HEK293T (cell line): ENCODE measurements at regions of chr11 and their contacts with region 1.

Region 1: GRCh38 chr11:30143098-30143705 is 87.6 kb upstream of the FSHB start:
- DNase-seq: peak; percentile 44

Region 2: DNA sequence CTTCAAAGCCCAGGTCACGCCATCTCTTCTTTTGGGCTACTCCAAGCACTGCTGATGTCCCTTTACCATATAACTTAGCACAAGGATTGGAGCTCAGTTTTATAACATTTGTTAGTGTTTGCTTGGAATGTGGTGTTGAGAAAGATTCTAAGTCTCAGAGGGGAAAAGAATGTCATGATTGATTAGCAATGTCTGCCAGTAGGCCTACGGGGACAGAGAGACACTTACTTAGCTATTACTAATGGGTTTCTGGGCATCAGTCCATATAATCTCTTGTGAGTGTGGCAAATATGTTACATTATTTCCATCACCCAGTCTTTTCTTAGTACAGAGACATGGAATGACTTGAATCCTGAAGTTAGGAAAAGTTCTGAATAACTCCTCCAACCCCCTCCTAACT is 12.2 kb after region 1 on chr11:
- CTCF ChIA-PET with region 1: interaction called, 17 read pairs
- POLR2A ChIA-PET with region 1: no interaction called
- DNase-seq: no peak